ENCODE measurements at regions of chr17 and their contacts with region 1.

Region 1: DNA sequence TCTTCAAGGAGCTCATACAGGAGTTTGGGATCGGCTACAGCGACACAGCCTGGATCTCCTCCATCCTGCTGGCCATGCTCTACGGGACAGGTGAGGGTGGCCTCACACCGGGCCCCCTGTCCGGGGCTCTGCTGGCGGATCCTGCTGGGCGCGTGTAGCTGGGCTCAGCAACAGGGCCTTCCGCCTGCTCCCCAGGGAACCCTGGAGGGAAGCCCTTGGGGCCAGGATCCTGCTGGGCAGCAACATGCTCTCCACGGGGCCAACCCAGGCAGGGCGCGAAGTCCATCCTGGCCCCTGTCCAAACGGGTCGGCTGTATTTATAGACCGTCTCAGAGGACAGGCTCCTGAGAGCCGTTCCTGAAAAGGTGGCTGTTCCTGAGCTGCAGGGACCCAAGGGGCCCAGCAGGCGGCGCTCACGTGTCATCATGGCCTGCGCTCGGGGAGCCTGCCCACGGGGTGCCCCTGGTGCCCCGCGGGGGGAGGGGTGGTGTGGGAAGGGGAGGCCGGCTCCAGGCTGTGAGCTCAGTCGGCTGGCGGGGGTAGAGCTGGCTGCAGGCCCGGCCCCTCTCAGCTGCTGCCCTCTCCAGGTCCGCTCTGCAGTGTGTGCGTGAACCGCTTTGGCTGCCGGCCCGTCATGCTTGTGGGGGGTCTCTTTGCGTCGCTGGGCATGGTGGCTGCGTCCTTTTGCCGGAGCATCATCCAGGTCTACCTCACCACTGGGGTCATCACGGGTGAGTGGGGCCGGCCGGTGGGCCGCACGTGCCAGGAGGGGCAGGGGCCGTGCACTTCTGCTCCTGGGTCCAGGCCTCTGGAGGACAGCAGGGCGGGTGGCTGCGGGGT is 7.5 kb downstream of the SLC16A3 start:
- DNase-seq: peak; percentile 97
- H3K4me3 ChIP-seq: no peak overlapping the region; a peak in 1 of 4 replicates
- H3K27ac ChIP-seq: peak overlapping the region in 1 of 2 experiments; percentile 6; a peak in 1 of 4 replicates
- H3K4me1 ChIP-seq: peaks cover 18 to 33% of the 10 kb centered on the region in 2 experiments; a peak in 3 of 4 replicates
- H3K27me3 ChIP-seq: no peaks in the 10 kb centered on the region
- CTCF ChIP-seq: peak; percentile 99
- EP300 ChIP-seq: no peak
- RAD21 ChIP-seq: peak; percentile 84

Region 2: GRCh38 chr17:82212331-82213250 is 23.8 kb before region 1 on chr17 and contains the start of gene CCDC57:
- CTCF ChIA-PET with region 1: interaction called, 45 read pairs
- POLR2A ChIA-PET with region 1: interaction called, 3 read pairs
- DNase-seq: peak; percentile 99
- H3K4me3 ChIP-seq: peak within 1 kb of the TSS; percentile 76 to 88
- H3K27ac ChIP-seq: peak within 1 kb of the TSS; percentile 83 to 89
- H3K4me1 ChIP-seq: peaks cover 20 to 41% of the 10 kb centered on the region in 2 experiments
- H3K27me3 ChIP-seq: no peaks in the 10 kb centered on the region
- CTCF ChIP-seq: no peak
- EP300 ChIP-seq: peak in 1 of 2 experiments; percentile 13; a peak in 1 of 4 replicates
- RAD21 ChIP-seq: no peak
- polyA plus RNA-seq, gene CCDC57: 68.6 and 82.9 TPM in 2 replicates

Region 3: GRCh38 chr17:82267575-82268379 is 31.4 kb after region 1 on chr17:
- CTCF ChIA-PET with region 1: interaction called, 14 read pairs
- POLR2A ChIA-PET with region 1: no interaction called
- DNase-seq: peak; percentile 66
- H3K4me3 ChIP-seq: peak overlapping the region; percentile 2 to 18
- H3K27ac ChIP-seq: peak overlapping the region; percentile 50 to 92
- H3K4me1 ChIP-seq: peaks cover 47 to 49% of the 10 kb centered on the region in 2 experiments; a peak in 3 of 4 replicates
- H3K27me3 ChIP-seq: no peaks in the 10 kb centered on the region
- CTCF ChIP-seq: peak; percentile 13; the same call in 1 of the 2 replicates
- EP300 ChIP-seq: no peak
- RAD21 ChIP-seq: no peak

Region 4: DNA sequence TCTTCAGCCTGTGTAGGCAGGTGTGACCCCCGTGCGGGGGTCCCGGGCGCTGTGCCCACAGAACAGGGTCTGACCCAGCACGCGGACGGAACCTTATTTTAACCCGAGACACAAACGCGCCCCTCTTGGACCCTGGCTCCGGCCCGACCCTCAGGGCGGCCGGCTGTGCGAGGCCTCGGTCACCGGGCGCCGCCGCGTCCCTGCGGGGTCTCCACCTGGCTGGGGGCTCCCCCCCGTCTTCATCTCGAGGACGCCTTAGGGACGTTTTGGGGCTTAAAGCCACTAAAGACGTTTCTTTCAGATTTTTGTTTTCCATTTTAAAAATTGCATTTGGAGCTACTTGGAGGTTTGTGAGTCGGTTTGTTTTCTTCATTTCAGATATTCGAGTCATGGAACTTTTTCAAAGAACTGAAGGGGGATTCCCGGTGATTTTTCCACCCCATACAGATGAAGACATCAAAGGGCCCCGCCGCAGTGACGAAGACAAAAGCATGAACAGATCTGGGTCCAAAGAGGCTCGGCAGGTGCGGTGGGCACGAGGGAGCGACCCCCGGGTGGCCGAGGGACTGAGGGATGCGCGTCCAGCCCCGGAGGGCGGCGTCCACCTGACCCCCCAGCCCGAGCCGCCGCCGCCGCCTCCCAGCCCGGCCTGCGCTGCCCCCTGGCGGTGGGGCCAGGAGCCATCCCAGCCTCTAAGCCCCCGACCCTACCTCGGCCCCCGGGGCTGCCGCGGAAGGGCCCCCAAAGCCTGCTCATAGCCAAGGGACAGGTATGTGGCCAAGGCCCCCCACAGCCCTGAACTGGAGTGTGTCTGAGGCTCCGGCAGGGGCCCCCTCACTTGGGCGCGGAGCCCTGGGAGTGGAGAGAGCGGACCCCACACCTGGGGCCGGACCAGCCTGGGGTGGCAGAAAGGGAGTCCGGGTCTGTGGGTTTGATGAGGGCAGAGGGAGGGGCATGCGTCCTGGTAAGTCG is 84.9 kb after region 1 on chr17:
- CTCF ChIA-PET with region 1: interaction called, 112 read pairs
- POLR2A ChIA-PET with region 1: no interaction called
- DNase-seq: peak; percentile 95
- H3K4me3 ChIP-seq: peak overlapping the region; percentile 32 to 52
- H3K27ac ChIP-seq: no peak overlapping the region
- H3K4me1 ChIP-seq: peaks cover 5 to 14% of the 10 kb centered on the region in 2 experiments; a peak in 3 of 4 replicates
- H3K27me3 ChIP-seq: peaks cover 17% of the 10 kb centered on the region; the same call in 1 of the 2 replicates
- CTCF ChIP-seq: peak; percentile 99
- EP300 ChIP-seq: no peak
- RAD21 ChIP-seq: peak; percentile 70

Region 5: GRCh38 chr17:82418001-82418986 is 181.9 kb after region 1 on chr17 and contains the starts of genes HEXD and OGFOD3:
- CTCF ChIA-PET with region 1: interaction called, 16 read pairs
- POLR2A ChIA-PET with region 1: no interaction called
- DNase-seq: peak; percentile 100
- H3K4me3 ChIP-seq: peak within 1 kb of the TSS; percentile 71 to 94
- H3K27ac ChIP-seq: peak within 1 kb of the TSS; percentile 45 to 90; a peak in 3 of 4 replicates
- H3K4me1 ChIP-seq: peaks cover 0 to 3% of the 10 kb centered on the region in 2 experiments; a peak in 2 of 4 replicates
- H3K27me3 ChIP-seq: no peaks in the 10 kb centered on the region
- CTCF ChIP-seq: no peak
- EP300 ChIP-seq: no peak; a peak in 1 of 4 replicates
- RAD21 ChIP-seq: no peak
- polyA plus RNA-seq, gene HEXD: 38.8 and 43.1 TPM in 2 replicates
- polyA plus RNA-seq, gene OGFOD3: 57.1 and 68.2 TPM in 2 replicates

Measured in SK-N-SH (cell line).